Head of caudate nucleus (tissue), 42 donors: ENCODE measurements at regions of chr4 and their contacts with region 1.

Region 1: GRCh38 chr4:174631901-174632758 is 109.8 kb upstream of the HPGD start:
- DNase-seq: peak in 6 of 42 donors; percentile 8 to 38 (median 21)

Region 2: DNA sequence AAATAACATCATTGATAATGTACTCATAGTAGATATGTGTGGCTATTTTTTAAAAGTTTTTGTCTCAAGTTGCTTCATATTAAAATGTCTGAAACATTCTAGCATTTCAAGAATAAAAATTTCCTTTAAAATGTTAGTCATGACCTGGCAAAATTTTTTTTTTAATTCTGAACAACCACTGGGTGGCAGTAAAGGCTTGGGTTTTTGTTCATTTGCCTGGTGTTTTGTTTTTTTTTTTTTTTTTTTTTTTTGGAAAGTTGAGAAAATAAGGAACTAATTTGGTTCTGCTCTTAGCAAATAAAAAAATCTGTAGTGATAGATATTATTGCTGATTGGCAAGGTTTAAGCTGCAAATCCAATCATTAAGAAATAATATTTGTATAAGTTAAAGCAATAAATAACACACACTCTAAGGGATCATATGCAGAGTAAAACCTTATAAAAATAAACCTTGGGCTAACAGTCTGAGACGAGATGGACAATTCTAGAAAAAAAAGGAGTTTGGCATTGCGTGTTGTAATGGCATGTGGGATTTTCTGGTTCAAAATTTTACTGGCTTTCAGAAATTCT is 267.0 kb before region 1 on chr4:
- intact Hi-C with region 1: loop called (anchors 10 kb)
- DNase-seq: peak in 5 of 42 donors; percentile 5 to 34 (median 19)

Region 3: GRCh38 chr4:174815282-174815681 is 183.2 kb after region 1 on chr4:
- intact Hi-C with region 1: no loop called
- DNase-seq: no peak